Heart right ventricle (tissue), 16 donors: ENCODE measurements at regions of chr1 and their contacts with region 1.

Region 1: GRCh38 chr1:184954231-184954995 is 19.9 kb downstream of the NIBAN1 start:
- DNase-seq: no peak
- ATAC-seq: peak in 4 of 8 donors; percentile 37 to 53 (median 49)
- H3K4me3 ChIP-seq: no peak overlapping the region
- H3K27ac ChIP-seq: peak overlapping the region; percentile 3 to 77 (median 49)
- H3K4me1 ChIP-seq: peaks cover 7 to 82% (median 38%) of the 10 kb centered on the region in 9 donors
- H3K27me3 ChIP-seq: no peaks in the 10 kb centered on the region
- CTCF ChIP-seq: peak in 3 of 9 donors; percentile 15 to 27 (median 25)

Region 2: DNA sequence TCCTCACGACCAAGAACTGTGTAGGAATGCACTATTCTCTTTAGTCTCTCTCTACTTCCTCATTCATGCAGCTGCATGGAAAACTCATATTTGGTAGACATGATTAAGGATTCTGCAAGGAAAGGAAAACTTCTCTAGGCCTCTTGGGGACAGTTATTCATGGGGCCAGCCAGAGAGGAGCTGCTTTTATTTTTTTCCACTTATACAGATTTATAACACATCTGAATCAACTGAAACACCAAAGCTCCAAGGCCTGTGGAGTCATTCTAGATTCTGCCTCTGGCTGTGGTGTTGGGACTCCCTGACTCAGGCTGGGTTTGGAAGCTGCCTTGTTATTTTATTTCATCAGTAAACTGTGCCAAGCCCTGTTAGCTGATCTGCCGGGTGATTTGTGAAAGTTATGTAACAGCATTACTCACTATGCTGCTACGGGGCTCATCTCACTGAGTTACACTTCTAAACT is 115.9 kb before region 1 on chr1:
- intact Hi-C with region 1: no loop called
- DNase-seq: peak in 1 of 2 donors; percentile 61
- ATAC-seq: peak; percentile 75 to 89 (median 84)
- H3K4me3 ChIP-seq: no peak overlapping the region
- H3K27ac ChIP-seq: peak overlapping the region; percentile 24 to 86 (median 68)
- H3K4me1 ChIP-seq: peaks cover 19 to 60% (median 41%) of the 10 kb centered on the region in 9 donors
- H3K27me3 ChIP-seq: no peaks in the 10 kb centered on the region
- CTCF ChIP-seq: no peak

Region 3: GRCh38 chr1:184860985-184861759 is 93.2 kb before region 1 on chr1:
- intact Hi-C with region 1: no loop called
- DNase-seq: no peak
- ATAC-seq: peak in 5 of 8 donors; percentile 53 to 69 (median 59)
- H3K4me3 ChIP-seq: no peak overlapping the region
- H3K27ac ChIP-seq: peak overlapping the region in 5 of 10 donors; percentile 0 to 55 (median 13)
- H3K4me1 ChIP-seq: peaks cover 0 to 69% (median 29%) of the 10 kb centered on the region in 9 donors
- H3K27me3 ChIP-seq: no peaks in the 10 kb centered on the region
- CTCF ChIP-seq: no peak

Region 4: DNA sequence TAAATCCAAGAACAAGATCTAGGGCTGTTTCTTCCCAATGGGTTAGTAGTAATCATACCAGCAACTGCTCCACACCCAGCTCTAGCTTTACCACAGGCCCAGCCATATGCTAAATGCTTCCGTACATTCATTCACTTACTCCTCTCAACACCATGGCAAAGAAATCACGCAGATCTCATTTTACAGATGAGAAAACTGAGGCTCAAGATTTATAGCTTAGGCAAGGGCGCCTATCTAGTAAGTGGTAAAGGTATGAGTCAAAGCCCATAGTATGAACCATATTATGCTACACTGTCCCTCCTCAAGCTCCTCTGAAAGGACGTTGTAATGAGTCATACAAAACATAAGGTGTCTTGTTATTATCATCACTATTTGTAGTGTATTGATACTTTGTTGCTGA is 62.3 kb before region 1 on chr1:
- intact Hi-C with region 1: loop called in 1 of 10 experiments (anchors 5 kb)
- DNase-seq: no peak
- ATAC-seq: no peak
- H3K4me3 ChIP-seq: no peak overlapping the region
- H3K27ac ChIP-seq: peak overlapping the region in 8 of 10 donors; percentile 56 to 92 (median 80)
- H3K4me1 ChIP-seq: peaks cover 0 to 85% (median 52%) of the 10 kb centered on the region in 9 donors
- H3K27me3 ChIP-seq: no peaks in the 10 kb centered on the region
- CTCF ChIP-seq: no peak

Region 5: DNA sequence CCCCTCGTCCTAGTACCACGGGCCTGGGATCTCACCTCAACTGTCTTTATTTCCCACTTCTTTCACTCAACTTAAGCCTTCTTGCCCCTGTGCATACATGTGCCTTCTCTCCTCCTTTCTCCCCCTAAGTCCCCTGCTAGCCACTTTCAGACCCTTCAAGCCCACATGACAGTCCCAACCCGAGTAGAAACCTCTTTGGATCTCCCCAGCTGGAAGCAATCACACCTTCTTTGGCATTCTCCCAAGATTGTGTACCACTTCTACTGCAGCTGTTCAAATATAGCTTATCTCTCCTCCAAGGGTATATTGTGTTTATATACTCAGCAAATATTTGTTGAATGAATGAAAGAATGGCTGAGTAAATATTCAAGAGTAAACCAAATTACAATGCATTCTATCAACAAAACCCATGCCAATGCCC is 48.9 kb before region 1 on chr1:
- intact Hi-C with region 1: loop called in 2 of 10 experiments (anchors 5 to 10 kb)
- DNase-seq: no peak
- ATAC-seq: peak in 5 of 8 donors; percentile 12 to 31 (median 17)
- H3K4me3 ChIP-seq: no peak overlapping the region
- H3K27ac ChIP-seq: peak overlapping the region in 6 of 10 donors; percentile 9 to 60 (median 22)
- H3K4me1 ChIP-seq: peaks cover 4 to 89% (median 66%) of the 10 kb centered on the region in 9 donors
- H3K27me3 ChIP-seq: no peaks in the 10 kb centered on the region
- CTCF ChIP-seq: no peak

Region 6: DNA sequence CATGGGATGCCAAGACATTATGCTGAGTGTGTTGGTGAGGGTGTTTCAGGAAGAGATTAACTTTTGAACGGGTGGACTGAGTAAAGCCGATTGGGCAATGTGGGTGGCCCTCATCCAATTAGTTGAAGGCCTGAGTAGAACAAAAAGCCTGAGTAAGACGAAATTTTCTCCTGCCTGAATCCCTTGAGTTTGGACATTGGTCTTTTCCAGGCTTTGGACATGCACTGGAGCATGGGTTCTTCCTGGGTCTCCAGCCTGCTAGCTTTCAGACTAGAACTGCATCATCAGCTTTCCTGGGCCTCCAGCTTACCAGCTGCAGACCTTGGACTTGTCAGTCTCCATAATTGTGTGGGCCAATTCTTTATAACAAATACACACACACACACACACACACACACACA is 43.7 kb before region 1 on chr1:
- intact Hi-C with region 1: loop called in 2 of 10 experiments (anchors 5 to 10 kb)
- DNase-seq: no peak
- ATAC-seq: peak in 7 of 8 donors; percentile 30 to 91 (median 54)
- H3K4me3 ChIP-seq: no peak overlapping the region
- H3K27ac ChIP-seq: peak overlapping the region in 4 of 10 donors; percentile 3 to 77 (median 37)
- H3K4me1 ChIP-seq: peaks cover 0 to 90% (median 48%) of the 10 kb centered on the region in 9 donors
- H3K27me3 ChIP-seq: no peaks in the 10 kb centered on the region
- CTCF ChIP-seq: no peak